Left cardiac atrium (tissue), 4 donors: ENCODE measurements at regions of chr19 and their contacts with region 1.

Region 1: GRCh38 chr19:34733826-34734600 is at the start of gene ZNF181:
- DNase-seq: peak; percentile 92
- ATAC-seq: peak; percentile 96 to 97
- total RNA-seq, gene ZNF181: 17.1 to 19.9 TPM

Region 2: DNA sequence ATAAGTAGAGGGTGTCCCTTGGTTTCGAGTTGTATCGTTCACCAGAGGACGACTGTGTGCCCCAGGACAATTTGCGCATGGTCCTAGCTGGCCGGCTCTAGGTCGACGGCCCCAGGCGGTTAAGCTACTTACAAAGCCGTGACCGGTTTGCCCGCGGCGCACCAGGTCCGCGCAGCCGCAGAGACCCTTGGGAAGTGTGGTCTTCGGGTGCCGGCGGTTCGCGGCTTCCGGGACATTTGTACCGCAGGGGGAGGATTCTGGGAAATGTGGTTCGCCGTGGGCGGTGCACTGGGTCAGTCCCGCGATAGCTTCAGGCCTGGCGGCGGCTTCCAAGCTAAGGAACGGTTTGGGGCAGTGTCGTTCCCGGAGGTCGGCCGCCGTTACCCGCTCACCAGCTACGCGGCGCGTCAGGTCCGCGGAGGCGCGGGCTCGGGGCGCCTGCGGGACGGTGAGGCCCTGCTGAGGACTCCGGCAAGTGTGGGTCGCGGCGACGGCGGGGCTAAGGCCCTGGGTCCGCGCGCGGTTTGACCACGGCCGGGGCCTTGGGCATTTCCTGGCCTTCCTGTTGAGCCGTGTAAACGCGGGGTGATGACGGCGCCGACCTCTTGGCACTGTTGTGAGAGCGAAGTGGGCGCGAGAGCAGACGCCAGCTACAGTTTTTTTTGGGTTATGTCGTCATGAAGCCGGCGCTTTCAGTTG is 56.5 kb before region 1 on chr19 and contains the start of gene ZNF302:
- intact Hi-C with region 1: loop called in 1 of 2 experiments (anchors 5 kb)
- DNase-seq: peak; percentile 98
- ATAC-seq: peak; percentile 99
- total RNA-seq, gene ZNF302: 25.3 to 30.7 TPM

Region 3: GRCh38 chr19:34692549-34692948 is 41.5 kb before region 1 on chr19:
- intact Hi-C with region 1: no loop called
- DNase-seq: no peak
- ATAC-seq: peak; percentile 40 to 63

Region 4: DNA sequence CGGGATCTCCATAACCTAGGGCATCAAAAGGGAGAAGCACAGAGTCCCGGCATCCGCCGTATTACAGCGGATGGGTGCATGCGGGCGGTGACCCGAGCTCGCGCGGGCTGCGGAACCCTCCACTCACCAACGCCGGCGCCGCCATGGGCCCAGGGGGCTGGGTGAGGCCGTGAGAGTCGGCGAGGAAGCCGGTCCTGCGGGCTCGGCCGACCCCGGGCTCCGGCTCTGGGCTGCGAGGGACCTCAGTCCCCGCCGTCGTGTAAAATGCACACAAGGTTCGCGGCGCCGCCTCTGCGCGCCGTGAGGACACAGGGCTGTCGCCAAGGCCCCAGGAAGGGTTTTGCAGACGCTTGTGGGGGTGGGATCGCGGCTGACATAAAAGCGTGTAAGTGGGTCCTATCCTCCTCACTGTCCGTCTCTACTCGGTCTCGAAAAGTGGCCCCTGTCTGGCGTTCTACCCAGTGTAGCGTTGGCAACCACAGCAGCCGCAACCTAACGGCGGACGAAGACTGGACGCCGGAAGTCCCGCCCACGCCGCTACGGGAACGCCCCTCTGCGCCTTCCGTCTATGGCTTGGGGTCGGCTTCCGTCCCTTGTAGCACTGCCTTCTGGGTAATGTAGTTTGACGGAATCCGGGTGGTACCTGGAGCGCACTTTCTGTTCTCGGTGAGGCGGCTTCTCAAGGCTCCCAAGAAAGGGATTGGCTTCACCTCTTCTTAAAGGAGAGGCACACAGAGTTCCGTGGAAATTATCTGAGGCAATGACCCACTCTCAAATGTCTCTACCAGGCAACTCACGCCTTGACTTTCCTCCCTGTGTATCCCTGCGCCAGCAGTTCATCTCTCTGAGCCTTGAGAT is 38.9 kb after region 1 on chr19 and contains the start of gene ZNF599:
- intact Hi-C with region 1: loop called in 1 of 2 experiments (anchors 2 kb)
- DNase-seq: peak; percentile 93
- ATAC-seq: peak; percentile 99 to 100
- total RNA-seq, gene ZNF599: 3.3 to 3.7 TPM

Region 5: GRCh38 chr19:34851353-34851752 is 117.3 kb after region 1 on chr19:
- intact Hi-C with region 1: no loop called
- DNase-seq: no peak
- ATAC-seq: no peak

Region 6: GRCh38 chr19:34926685-34927375 is 192.8 kb after region 1 on chr19 and contains the start of gene ZNF30:
- intact Hi-C with region 1: loop called in 1 of 2 experiments (anchors 2 kb)
- DNase-seq: peak; percentile 95
- ATAC-seq: peak; percentile 100
- total RNA-seq, gene ZNF30: 1.4 to 2.6 TPM